CD4-positive, alpha-beta memory T cell (primary cell): ENCODE measurements at regions of chr19 and their contacts with region 1.

Region 1: GRCh38 chr19:49877020-49877878 is at the starts of genes AKT1S1 and TBC1D17:
- DNase-seq: peak; percentile 99 to 100 (median 100)
- H3K4me3 ChIP-seq: peak within 1 kb of the TSS; percentile 97 to 98
- H3K4me3 Mint-ChIP-seq: no peak within 1 kb of the TSS
- H3K27ac ChIP-seq: peak within 1 kb of the TSS; percentile 95
- H3K27ac Mint-ChIP-seq: no peak within 1 kb of the TSS
- H3K4me1 ChIP-seq: peaks cover 29% of the 10 kb centered on the region
- H3K4me1 Mint-ChIP-seq: peaks cover 14 to 44% (median 18%) of the 10 kb centered on the region in 4 donors
- H3K27me3 ChIP-seq: no peaks in the 10 kb centered on the region
- H3K27me3 Mint-ChIP-seq: no peaks in the 10 kb centered on the region
- total RNA-seq, gene AKT1S1: 19.7 to 20.2 TPM
- total RNA-seq, gene TBC1D17: 101 TPM

Region 2: GRCh38 chr19:49590071-49590970 is 286.9 kb before region 1 on chr19:
- CTCF ChIA-PET with region 1: no interaction called
- POLR2A ChIA-PET with region 1: no interaction called
- intact Hi-C with region 1: loop called (anchors 2 kb)
- DNase-seq: peak; percentile 94 to 96 (median 95)
- H3K4me3 ChIP-seq: peak overlapping the region; percentile 68 to 95
- H3K4me3 Mint-ChIP-seq: peak overlapping the region; percentile 81 to 95 (median 93)
- H3K27ac ChIP-seq: peak overlapping the region; percentile 74
- H3K27ac Mint-ChIP-seq: peak overlapping the region; percentile 84 to 97 (median 94)
- H3K4me1 ChIP-seq: peaks cover 23% of the 10 kb centered on the region
- H3K4me1 Mint-ChIP-seq: peaks cover 21 to 48% (median 31%) of the 10 kb centered on the region in 4 donors
- H3K27me3 ChIP-seq: no peaks in the 10 kb centered on the region
- H3K27me3 Mint-ChIP-seq: no peaks in the 10 kb centered on the region

Region 3: DNA sequence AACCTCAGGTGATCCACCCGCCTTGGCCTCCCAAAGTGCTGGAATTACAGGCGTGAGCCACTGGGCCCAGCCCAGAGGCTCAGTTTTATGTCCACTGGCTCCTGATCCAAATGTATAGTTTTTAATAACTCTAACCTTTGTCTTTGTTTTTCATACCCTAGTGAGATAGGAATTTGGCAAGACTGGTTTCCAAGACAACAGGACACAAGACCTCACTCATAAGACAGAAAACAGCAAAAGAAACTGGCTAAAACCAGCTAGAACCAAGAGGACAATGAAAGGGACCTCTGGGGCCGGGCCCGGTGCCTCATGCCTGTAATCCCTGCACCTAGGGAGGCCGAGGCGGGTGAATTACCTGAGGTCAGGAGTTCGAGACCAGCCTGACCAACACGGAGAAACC is 158.7 kb before region 1 on chr19:
- CTCF ChIA-PET with region 1: interaction called, 3 read pairs
- POLR2A ChIA-PET with region 1: interaction called, 6 read pairs
- intact Hi-C with region 1: loop called (anchors 5 kb)
- DNase-seq: no peak
- H3K4me3 ChIP-seq: no peak overlapping the region
- H3K4me3 Mint-ChIP-seq: peak overlapping the region in 6 of 8 donors; percentile 15 to 96 (median 49)
- H3K27ac ChIP-seq: no peak overlapping the region
- H3K27ac Mint-ChIP-seq: peak overlapping the region in 5 of 7 donors; percentile 25 to 98 (median 79)
- H3K4me1 ChIP-seq: peaks cover 12% of the 10 kb centered on the region
- H3K4me1 Mint-ChIP-seq: peaks cover 7 to 12% (median 10%) of the 10 kb centered on the region in 4 donors
- H3K27me3 ChIP-seq: no peaks in the 10 kb centered on the region
- H3K27me3 Mint-ChIP-seq: no peaks in the 10 kb centered on the region

Region 4: GRCh38 chr19:49817964-49818648 is 59.1 kb before region 1 on chr19 and contains the start of gene MED25:
- CTCF ChIA-PET with region 1: no interaction called
- POLR2A ChIA-PET with region 1: interaction called, 37 read pairs
- intact Hi-C with region 1: loop called (anchors 1 kb)
- DNase-seq: peak; percentile 90 to 96 (median 95)
- H3K4me3 ChIP-seq: peak within 1 kb of the TSS; percentile 64 to 88
- H3K4me3 Mint-ChIP-seq: peak within 1 kb of the TSS; percentile 89 to 99 (median 99)
- H3K27ac ChIP-seq: peak within 1 kb of the TSS; percentile 95
- H3K27ac Mint-ChIP-seq: peak within 1 kb of the TSS; percentile 98 to 100 (median 100)
- H3K4me1 ChIP-seq: peaks cover 33% of the 10 kb centered on the region
- H3K4me1 Mint-ChIP-seq: peaks cover 17 to 54% (median 36%) of the 10 kb centered on the region in 4 donors
- H3K27me3 ChIP-seq: no peaks in the 10 kb centered on the region
- H3K27me3 Mint-ChIP-seq: no peaks in the 10 kb centered on the region
- total RNA-seq, gene MED25: 41.8 to 48.8 TPM

Region 5: DNA sequence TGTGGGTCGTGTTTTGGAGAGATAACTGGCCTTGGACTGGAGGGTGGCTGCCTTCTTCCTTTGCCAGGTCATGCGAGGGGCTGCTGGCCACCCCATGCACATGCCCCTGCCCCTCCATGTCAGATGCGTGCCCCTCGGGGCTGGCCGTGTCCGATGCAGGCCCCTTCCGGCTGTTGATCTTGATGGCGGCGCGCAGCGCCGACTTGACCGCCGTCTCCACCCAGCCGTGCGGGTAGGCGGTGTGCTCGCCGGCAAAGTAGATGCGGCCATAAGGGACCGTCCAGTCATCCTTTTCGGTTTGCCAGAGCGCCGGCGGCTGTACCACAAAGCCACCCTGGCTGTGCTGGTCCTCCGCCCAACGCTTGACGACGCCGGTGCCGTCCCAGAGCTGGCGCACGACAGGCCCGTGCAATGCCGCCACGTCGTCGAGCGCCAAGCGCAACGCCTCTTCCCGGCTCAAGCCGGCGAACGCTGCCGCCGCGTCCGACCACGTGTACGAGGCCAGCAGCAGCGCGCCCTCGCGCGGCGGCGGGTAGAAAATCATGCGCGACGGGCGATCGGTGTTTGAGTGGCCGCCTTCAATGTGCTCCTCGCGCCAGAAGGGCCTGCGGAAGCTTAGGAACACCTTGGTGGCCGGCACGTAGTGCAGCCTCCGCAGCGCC is 12.6 kb after region 1 on chr19:
- CTCF ChIA-PET with region 1: interaction called, 3 read pairs
- POLR2A ChIA-PET with region 1: interaction called, 51 read pairs
- intact Hi-C with region 1: loop called (anchors 1 kb)
- DNase-seq: peak; percentile 77 to 79 (median 77)
- H3K4me3 ChIP-seq: peak overlapping the region in 1 of 2 donors; percentile 63
- H3K4me3 Mint-ChIP-seq: peak overlapping the region; percentile 77 to 85 (median 80)
- H3K27ac ChIP-seq: peak overlapping the region; percentile 39
- H3K27ac Mint-ChIP-seq: peak overlapping the region; percentile 81 to 95 (median 90)
- H3K4me1 ChIP-seq: peaks cover 10% of the 10 kb centered on the region
- H3K4me1 Mint-ChIP-seq: peaks cover 4 to 34% (median 23%) of the 10 kb centered on the region in 4 donors
- H3K27me3 ChIP-seq: no peaks in the 10 kb centered on the region
- H3K27me3 Mint-ChIP-seq: no peaks in the 10 kb centered on the region

Region 6: DNA sequence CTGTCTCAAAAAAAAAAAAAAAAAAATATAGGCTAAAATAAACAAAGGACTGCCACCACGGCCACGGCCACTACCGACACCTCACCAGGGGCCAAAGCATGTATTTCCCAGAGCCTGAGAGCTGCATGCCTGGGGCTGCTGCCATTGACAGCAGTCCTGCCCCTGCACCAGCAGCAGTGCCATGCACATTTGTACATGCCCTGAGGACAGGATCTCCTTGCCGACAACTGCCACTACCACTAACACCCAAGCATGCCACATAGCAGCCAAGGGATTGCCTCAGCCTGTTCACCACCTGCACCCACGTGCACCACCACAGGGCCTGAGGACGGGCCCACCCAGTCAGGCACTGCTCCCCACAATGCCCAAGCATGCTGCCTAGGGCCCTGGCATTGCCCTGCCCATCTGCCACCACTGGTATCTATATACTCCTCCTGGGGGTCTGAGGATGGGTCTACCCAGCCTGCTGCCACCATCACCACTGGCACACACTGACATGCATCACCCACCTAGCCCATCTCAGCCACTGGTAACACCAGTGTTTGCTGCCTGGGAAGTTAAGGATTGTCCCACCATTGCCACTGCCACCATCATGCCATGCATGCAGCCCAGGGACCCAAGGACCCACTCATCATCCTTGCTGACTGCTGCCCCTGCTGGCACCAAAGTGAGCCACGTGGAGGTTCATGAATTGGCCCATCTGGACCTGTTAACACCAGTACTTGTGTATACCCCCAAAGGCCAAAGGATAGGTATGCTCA is 62.7 kb after region 1 on chr19:
- CTCF ChIA-PET with region 1: no interaction called
- POLR2A ChIA-PET with region 1: no interaction called
- intact Hi-C with region 1: no loop called
- DNase-seq: no peak
- H3K4me3 ChIP-seq: no peak overlapping the region
- H3K4me3 Mint-ChIP-seq: no peak overlapping the region
- H3K27ac ChIP-seq: no peak overlapping the region
- H3K27ac Mint-ChIP-seq: peak overlapping the region in 1 of 7 donors; percentile 60
- H3K4me1 ChIP-seq: peaks cover 7% of the 10 kb centered on the region
- H3K4me1 Mint-ChIP-seq: peaks cover 0 to 8% (median 4%) of the 10 kb centered on the region in 4 donors
- H3K27me3 ChIP-seq: no peaks in the 10 kb centered on the region
- H3K27me3 Mint-ChIP-seq: peaks cover 7 to 12% of the 10 kb centered on the region in 2 donors

Region 7: DNA sequence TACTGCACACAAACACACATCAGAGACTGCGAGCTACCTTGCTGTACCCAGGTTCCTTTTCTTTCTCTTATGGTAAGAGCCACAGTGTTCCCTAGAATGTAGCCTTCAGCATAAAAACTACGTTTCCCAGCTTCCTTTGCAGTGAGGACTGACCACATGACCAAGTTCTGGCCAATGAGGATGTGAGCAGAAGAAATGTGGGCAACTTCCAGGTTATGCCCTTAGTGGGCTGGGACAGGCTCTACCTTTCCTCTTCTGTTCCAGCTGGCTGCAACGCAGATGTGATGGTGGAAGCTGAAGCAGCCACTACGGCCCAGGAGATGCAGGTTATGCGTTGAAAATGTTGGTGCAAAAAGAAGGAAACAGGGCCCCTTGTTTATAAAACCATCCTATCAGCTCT is 120.5 kb after region 1 on chr19:
- CTCF ChIA-PET with region 1: no interaction called
- POLR2A ChIA-PET with region 1: no interaction called
- intact Hi-C with region 1: no loop called
- DNase-seq: peak in 3 of 5 donors; percentile 6 to 17 (median 13)
- H3K4me3 ChIP-seq: no peak overlapping the region
- H3K4me3 Mint-ChIP-seq: no peak overlapping the region
- H3K27ac ChIP-seq: no peak overlapping the region
- H3K27ac Mint-ChIP-seq: peak overlapping the region in 1 of 7 donors; percentile 80
- H3K4me1 ChIP-seq: no peaks in the 10 kb centered on the region
- H3K4me1 Mint-ChIP-seq: peaks cover 0 to 3% (median 2%) of the 10 kb centered on the region in 4 donors
- H3K27me3 ChIP-seq: no peaks in the 10 kb centered on the region
- H3K27me3 Mint-ChIP-seq: no peaks in the 10 kb centered on the region